ENCODE measurements at regions of chr1 and their contacts with region 1.

Region 1: GRCh38 chr1:201877877-201878401 is 10.8 kb upstream of the SHISA4 start:
- DNase-seq: no peak
- H3K4me3 ChIP-seq: no peak overlapping the region
- H3K27ac ChIP-seq: no peak overlapping the region
- H3K4me1 ChIP-seq: no peaks in the 10 kb centered on the region
- H3K27me3 ChIP-seq: no peaks in the 10 kb centered on the region
- CTCF ChIP-seq: peak; percentile 52

Region 2: DNA sequence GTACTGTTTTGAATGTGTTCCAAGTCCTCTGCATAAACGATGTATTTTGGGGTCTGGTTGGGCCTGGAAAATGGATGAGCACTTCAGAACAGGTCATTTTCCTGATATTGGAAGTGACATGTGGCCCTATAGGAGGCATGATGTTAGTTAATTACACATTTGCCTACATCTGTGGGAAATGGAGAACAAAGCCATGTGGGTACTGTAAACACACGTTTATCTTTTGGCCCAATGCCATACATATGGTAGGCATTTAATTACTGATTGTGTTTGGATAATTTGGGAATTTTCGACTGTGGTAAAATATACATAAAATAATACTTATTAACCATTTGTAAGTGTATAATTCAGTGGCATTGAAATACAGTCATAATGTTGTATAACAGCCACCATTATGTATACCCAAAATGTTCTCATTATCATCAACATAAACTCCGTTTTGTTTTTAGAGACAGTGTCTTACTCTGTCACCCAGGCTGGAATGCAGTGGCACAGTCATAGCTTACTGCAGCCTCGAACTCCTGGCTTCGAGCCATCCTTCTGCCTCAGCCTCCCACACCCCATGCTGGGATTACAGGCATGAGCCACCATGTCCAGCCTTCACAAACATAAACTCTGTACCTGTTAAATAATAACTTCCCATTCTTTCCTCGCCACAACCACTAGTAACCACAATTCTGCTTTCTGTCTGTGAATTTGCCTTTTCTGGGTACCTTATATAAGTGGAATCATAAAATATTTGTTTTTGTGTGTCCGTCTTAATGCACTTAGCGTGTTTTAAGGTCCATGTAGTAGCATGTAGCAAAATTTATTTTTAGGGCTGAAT is 92.6 kb after region 1 on chr1:
- intact Hi-C with region 1: loop called (anchors 5 kb)
- DNase-seq: no peak
- H3K4me3 ChIP-seq: no peak overlapping the region
- H3K27ac ChIP-seq: no peak overlapping the region
- H3K4me1 ChIP-seq: no peaks in the 10 kb centered on the region
- H3K27me3 ChIP-seq: no peaks in the 10 kb centered on the region
- CTCF ChIP-seq: no peak

Region 3: GRCh38 chr1:202144402-202145067 is 266.6 kb after region 1 on chr1 and contains the start of gene ARL8A:
- intact Hi-C with region 1: loop called (anchors 5 kb)
- DNase-seq: peak; percentile 80
- H3K4me3 ChIP-seq: peak within 1 kb of the TSS; percentile 97
- H3K27ac ChIP-seq: peak within 1 kb of the TSS; percentile 80
- H3K4me1 ChIP-seq: no peaks in the 10 kb centered on the region
- H3K27me3 ChIP-seq: no peaks in the 10 kb centered on the region
- CTCF ChIP-seq: no peak
- total RNA-seq, gene ARL8A: 30.3 to 57.0 TPM

Measured in colonic mucosa (tissue), 4 donors.